PC-3 (cell line): ENCODE measurements at regions of chr15 and their contacts with region 1.

Region 1: GRCh38 chr15:76139368-76140073 is 79.7 kb downstream of the TMEM266 start:
- DNase-seq: peak; percentile 86
- ATAC-seq: peak; percentile 80
- H3K4me3 ChIP-seq: no peak overlapping the region
- H3K27ac ChIP-seq: no peak overlapping the region
- H3K4me1 ChIP-seq: no peaks in the 10 kb centered on the region
- H3K27me3 ChIP-seq: 0 out of 2 replicates have a peak, but pooled peaks cover 25% of the 10 kb centered on the region
- CTCF ChIP-seq: peak; percentile 89

Region 2: DNA sequence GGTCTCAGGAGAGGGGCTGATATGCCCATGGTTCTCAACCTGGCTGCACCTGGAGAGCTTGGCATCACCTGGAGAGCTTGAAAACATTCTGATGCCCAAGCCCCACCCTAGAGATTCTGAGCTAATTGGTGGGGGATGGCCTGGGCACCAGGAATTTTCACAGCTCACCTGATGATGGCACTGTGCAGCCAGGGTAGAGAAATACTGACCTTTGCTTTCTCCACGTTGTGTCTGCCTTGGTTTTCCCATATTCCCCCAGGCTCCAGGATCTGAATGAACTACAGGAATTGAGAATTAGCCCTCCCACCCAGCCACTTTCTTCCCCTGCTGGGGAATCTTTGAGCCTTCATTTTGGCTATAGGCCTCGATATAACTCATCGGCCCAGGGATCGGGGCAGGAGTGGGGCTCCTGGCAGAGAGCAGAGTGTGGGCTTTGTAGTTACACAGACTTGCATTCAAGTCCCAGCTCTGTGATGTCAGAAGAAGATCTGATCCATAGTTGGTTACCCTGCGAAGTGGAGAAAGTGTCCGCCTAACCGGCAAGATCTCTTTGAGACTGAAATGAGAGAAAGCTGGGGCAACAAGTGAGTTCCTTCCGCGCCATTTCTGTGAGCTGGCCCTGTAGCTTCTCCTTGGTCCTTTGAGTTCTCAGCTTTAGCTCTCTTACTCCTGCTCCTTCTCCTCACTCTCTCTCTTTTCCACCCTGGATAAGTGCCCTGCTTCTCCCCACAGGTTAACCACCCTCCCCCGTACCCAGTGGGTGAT is 329.4 kb before region 1 on chr15:
- CTCF ChIA-PET with region 1: interaction called, 13 read pairs
- POLR2A ChIA-PET with region 1: no interaction called
- intact Hi-C with region 1: loop called (anchors 1 kb)
- DNase-seq: peak; percentile 57
- ATAC-seq: peak; percentile 79
- H3K4me3 ChIP-seq: no peak overlapping the region
- H3K27ac ChIP-seq: no peak overlapping the region
- H3K4me1 ChIP-seq: no peaks in the 10 kb centered on the region
- H3K27me3 ChIP-seq: no peaks in the 10 kb centered on the region
- CTCF ChIP-seq: peak; percentile 66